HEK293 (cell line): ENCODE measurements at regions of chr19 and their contacts with region 1.

Region 1: DNA sequence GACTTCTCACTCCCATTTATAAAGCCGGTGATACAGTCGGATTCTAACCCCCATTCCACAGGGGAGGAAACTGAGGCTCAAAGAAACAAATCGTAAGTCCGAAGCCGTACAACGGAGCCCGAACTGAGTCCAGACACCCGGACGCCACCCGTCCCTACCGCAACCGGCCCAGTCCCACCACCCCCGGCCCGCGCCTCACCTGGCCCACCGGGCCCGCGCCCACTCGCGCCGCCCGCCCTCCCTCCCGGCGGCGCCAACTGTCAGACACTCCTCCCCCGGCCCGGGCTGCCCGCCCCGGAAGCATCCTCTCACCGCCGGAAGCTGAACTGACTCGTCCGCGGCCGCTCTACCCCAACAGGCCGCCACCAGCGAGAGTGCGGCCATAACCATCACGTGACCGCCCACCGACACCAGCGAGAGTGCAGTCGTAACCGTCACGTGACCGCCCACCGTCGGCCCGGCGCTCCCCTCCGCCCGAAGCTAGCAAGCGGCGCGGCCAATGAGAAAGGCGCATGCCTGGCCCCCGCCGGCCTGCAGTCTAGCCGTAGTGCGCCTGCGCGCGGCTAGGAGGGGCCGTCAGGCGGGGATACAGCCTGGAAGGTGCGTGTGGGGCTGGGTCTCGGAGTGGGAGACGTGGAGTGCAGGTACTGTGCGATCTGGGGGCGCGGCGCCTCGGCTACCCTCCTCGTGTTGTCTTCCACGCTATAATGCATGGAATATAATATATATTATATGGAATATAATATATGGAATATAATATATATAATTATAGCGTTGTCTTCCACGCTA is at the starts of genes C19orf47 and PLD3:
- H3K4me3 ChIP-seq: peak within 1 kb of the TSS; percentile 71
- H3K27ac ChIP-seq: peak within 1 kb of the TSS; percentile 73
- H3K4me1 ChIP-seq: peaks cover 8% of the 10 kb centered on the region
- CTCF ChIP-seq: peak; percentile 22; the same call in 1 of the 2 replicates

Region 2: GRCh38 chr19:40200341-40201099 is 147.8 kb before region 1 on chr19:
- CTCF ChIA-PET with region 1: no interaction called
- POLR2A ChIA-PET with region 1: no interaction called
- H3K4me3 ChIP-seq: no peak overlapping the region
- H3K27ac ChIP-seq: peak overlapping the region; percentile 11; the same call in 1 of the 2 replicates
- H3K4me1 ChIP-seq: no peaks in the 10 kb centered on the region
- CTCF ChIP-seq: no peak

Region 3: DNA sequence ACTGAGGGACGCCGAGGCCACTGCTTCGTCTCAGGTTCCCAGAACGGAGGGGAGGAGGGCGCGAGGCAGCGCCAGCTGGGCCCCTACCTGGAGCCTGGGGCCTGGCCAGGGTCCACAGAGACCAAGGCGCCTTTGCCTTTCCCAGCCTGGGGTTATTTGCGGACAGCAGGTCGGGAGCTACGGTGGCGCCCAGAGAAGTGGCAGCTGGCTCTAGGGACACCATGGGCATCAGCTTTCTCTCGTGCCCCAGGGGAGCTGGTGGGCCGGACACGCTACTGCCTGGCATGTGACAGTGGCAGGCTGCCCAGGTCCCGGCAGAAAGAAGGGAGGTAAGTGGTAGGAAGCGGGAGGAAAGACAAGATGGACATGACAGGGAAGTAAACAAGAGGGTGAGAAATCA is 82.2 kb before region 1 on chr19:
- CTCF ChIA-PET with region 1: no interaction called
- POLR2A ChIA-PET with region 1: no interaction called
- H3K4me3 ChIP-seq: no peak overlapping the region
- H3K27ac ChIP-seq: peak overlapping the region; percentile 55
- H3K4me1 ChIP-seq: no peaks in the 10 kb centered on the region; the same call in 1 of the 2 replicates
- CTCF ChIP-seq: no peak

Region 4: GRCh38 chr19:40335855-40336600 is 12.3 kb before region 1 on chr19:
- CTCF ChIA-PET with region 1: interaction called, 4 read pairs
- POLR2A ChIA-PET with region 1: interaction called, 36 read pairs
- H3K4me3 ChIP-seq: no peak overlapping the region
- H3K27ac ChIP-seq: peak overlapping the region; percentile 29; the same call in 1 of the 2 replicates
- H3K4me1 ChIP-seq: no peaks in the 10 kb centered on the region
- CTCF ChIP-seq: no peak

Region 5: GRCh38 chr19:40403262-40403984 is 55.1 kb after region 1 on chr19:
- CTCF ChIA-PET with region 1: interaction called, 3 read pairs
- POLR2A ChIA-PET with region 1: interaction called, 18 read pairs
- H3K4me3 ChIP-seq: peak overlapping the region; percentile 50
- H3K27ac ChIP-seq: peak overlapping the region; percentile 80
- H3K4me1 ChIP-seq: peaks cover 9% of the 10 kb centered on the region
- CTCF ChIP-seq: peak; percentile 68; the same call in 1 of the 2 replicates

Region 6: GRCh38 chr19:40444192-40445028 is 96.1 kb after region 1 on chr19 and contains the start of gene SERTAD3:
- CTCF ChIA-PET with region 1: no interaction called
- POLR2A ChIA-PET with region 1: interaction called, 29 read pairs
- H3K4me3 ChIP-seq: peak within 1 kb of the TSS; percentile 67
- H3K27ac ChIP-seq: peak within 1 kb of the TSS; percentile 99
- H3K4me1 ChIP-seq: peaks cover 14% of the 10 kb centered on the region
- CTCF ChIP-seq: peak; percentile 97